ENCODE measurements at regions of chr2 and their contacts with region 1.

Region 1: DNA sequence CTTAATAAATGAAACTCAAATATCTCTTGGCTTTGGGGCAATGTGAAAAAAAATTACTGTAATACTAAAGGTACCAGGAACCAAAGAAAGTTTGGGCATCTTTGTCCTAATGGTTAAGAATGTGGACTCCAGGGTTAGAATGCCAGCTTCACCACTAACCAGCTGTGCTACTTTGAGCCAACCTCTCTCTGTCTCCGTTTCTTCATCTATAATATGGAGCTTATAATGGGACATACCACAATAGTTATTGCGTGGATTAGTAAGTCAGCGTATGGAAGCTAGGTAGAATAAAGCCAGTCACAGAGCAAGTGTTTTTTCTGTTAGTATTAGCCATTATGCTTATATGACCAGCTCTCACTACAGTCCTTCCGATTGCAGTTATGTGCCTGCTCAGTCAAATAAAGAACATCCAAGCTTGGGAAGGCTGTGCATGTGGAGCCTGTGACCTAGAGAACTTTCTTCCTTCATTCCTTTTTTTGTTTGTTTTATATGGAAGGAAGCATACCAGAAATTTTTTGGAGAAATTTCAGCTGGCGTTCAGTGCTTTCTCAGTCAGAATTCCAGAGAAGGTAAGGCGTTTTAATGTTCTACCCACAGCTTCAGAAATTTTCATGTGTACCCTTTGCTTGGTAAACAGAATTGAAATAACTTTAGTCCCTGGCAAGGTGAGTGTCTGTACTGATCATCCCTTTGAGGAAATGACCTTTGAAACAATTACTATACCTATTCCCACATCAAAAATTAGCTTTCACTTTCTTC is 114.0 kb upstream of the RND3 start:
- DNase-seq: peak in 1 of 2 experiments; percentile 52
- ATAC-seq: peak; percentile 84 to 94
- H3K4me3 ChIP-seq: peak overlapping the region; percentile 5; the same call in 1 of the 3 replicates
- H3K27ac ChIP-seq: peak overlapping the region; percentile 63 to 85
- H3K4me1 ChIP-seq: peaks cover 24% of the 10 kb centered on the region
- CTCF ChIP-seq: no peak
- EP300 ChIP-seq: peak in 1 of 2 experiments; percentile 69; a peak in 3 of 5 replicates
- POLR2A ChIP-seq: no peak
- RAD21 ChIP-seq: 0 out of 5 replicates have a peak, but pooled peaks of 1 of the 2 experiments have one; percentile 28

Region 2: DNA sequence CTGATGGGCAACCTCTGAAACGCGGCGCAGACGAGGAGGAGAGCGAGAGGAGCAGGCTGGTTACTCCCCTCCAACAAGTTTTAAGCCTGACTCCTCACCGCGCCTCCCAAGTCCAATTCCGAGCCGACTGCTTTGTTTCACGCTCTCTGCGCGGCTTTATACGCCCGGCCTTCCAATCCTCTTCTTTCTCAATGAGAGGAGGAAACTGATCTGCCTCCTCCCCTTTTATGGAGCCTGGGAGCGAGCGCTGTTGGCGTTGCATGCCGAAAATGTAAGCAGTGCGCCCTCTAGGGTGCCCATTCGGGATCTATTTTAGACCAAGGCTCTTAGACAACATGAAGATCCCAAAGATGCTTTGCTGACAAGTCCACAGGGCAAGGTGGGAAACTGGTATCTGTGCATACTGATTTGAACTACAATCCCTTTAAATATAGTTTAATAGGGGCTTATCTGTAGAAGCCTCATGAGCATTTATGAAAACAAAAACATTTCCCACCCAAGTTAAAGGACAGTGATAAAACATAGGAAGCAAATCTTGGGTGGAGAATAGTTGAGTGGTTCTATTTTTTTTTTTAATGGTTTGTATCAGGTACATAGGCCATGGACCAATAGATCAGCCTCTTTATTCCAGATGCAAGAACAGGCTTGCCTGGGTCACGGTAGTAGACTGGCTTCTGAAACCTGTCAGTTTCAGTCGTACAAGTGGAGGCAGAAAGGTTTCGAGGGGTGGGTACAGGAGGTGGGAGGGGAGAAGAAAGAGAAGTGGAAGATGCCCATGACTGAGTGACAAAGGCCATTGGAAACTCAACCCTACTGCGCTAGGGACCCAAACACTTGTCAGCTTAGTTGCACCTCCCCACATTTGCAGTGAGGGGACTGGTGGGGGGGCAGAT is 113.7 kb before region 1 on chr2 and contains the start of gene RND3:
- CTCF ChIA-PET with region 1: interaction called, 3 read pairs
- POLR2A ChIA-PET with region 1: interaction called, 11 read pairs
- DNase-seq: peak; percentile 86 to 99
- ATAC-seq: peak; percentile 62 to 64
- H3K4me3 ChIP-seq: peak within 1 kb of the TSS; percentile 84
- H3K27ac ChIP-seq: peak within 1 kb of the TSS; percentile 85 to 98
- H3K4me1 ChIP-seq: peaks cover 45% of the 10 kb centered on the region
- CTCF ChIP-seq: peak; percentile 87
- EP300 ChIP-seq: no peak
- POLR2A ChIP-seq: peak; percentile 100
- RAD21 ChIP-seq: peak; percentile 87 to 92
- polyA plus RNA-seq, gene RND3: 127 and 137 TPM in 2 replicates

Region 3: GRCh38 chr2:150586858-150587257 is 14.6 kb before region 1 on chr2:
- CTCF ChIA-PET with region 1: interaction called, 12 read pairs
- POLR2A ChIA-PET with region 1: interaction called, 10 read pairs
- DNase-seq: peak; percentile 32 to 83
- ATAC-seq: peak; percentile 92 to 97
- H3K4me3 ChIP-seq: no peak overlapping the region
- H3K27ac ChIP-seq: peak overlapping the region; percentile 75 to 83
- H3K4me1 ChIP-seq: peaks cover 41% of the 10 kb centered on the region
- CTCF ChIP-seq: no peak
- EP300 ChIP-seq: peak; percentile 87 to 89; a peak in 4 of 5 replicates
- POLR2A ChIP-seq: no peak
- RAD21 ChIP-seq: peak in 1 of 2 experiments; percentile 47; a peak in 2 of 5 replicates